Right ventricle myocardium superior (tissue), 1 donor: ENCODE measurements at regions of chr10 and their contacts with region 1.

Region 1: GRCh38 chr10:97731346-97732051 is 5.4 kb upstream of the ZFYVE27 start:
- DNase-seq: no peak
- ATAC-seq: peak; percentile 77

Region 2: GRCh38 chr10:97676770-97677581 is 54.5 kb before region 1 on chr10:
- intact Hi-C with region 1: loop called (anchors 5 kb)
- DNase-seq: no peak
- ATAC-seq: peak; percentile 82

Region 3: GRCh38 chr10:97708976-97709946 is 22.2 kb before region 1 on chr10:
- intact Hi-C with region 1: loop called (anchors 2 kb)
- DNase-seq: peak; percentile 66
- ATAC-seq: peak; percentile 24